CD8-positive, alpha-beta memory T cell (primary cell): ENCODE measurements at regions of chr16 and their contacts with region 1.

Region 1: GRCh38 chr16:67480833-67481560 is at the start of gene ATP6V0D1:
- DNase-seq: peak; percentile 98 to 99 (median 99)
- H3K4me3 ChIP-seq: peak within 1 kb of the TSS; percentile 96
- H3K4me3 Mint-ChIP-seq: peak within 1 kb of the TSS; percentile 96 to 100 (median 100)
- H3K27ac ChIP-seq: peak within 1 kb of the TSS; percentile 98
- H3K27ac Mint-ChIP-seq: peak within 1 kb of the TSS; percentile 96 to 100 (median 99)
- H3K4me1 ChIP-seq: peaks cover 28% of the 10 kb centered on the region
- H3K4me1 Mint-ChIP-seq: peaks cover 45 to 72% (median 47%) of the 10 kb centered on the region in 3 donors
- H3K27me3 ChIP-seq: no peaks in the 10 kb centered on the region
- H3K27me3 Mint-ChIP-seq: peaks cover 0 to 2% of the 10 kb centered on the region in 2 donors
- total RNA-seq, gene ATP6V0D1: 49.3 to 57.6 TPM

Region 2: DNA sequence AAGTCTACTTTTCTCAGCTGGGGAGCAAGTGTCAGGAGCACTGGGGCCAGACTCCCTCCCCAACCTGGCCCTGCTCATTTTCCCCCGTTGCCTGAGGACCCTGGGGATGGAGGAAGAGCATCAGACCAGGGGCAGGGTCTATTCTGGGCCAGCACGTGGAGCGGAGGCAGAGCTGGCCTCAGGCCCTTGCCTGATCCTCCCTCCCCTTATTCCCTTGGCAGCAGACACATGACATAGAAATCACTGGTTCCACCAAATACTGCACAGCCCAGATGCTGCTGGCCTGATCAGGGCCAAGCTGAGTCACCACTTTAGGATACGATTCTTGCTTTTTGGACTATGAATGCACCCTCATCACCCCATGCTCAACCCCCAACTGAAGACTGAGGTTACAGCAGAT is 18.1 kb after region 1 on chr16:
- CTCF ChIA-PET with region 1: interaction called, 30 read pairs
- POLR2A ChIA-PET with region 1: no interaction called
- DNase-seq: no peak
- H3K4me3 ChIP-seq: no peak overlapping the region
- H3K4me3 Mint-ChIP-seq: no peak overlapping the region
- H3K27ac ChIP-seq: no peak overlapping the region
- H3K27ac Mint-ChIP-seq: peak overlapping the region in 6 of 8 donors; percentile 50 to 92 (median 72)
- H3K4me1 ChIP-seq: peaks cover 18% of the 10 kb centered on the region
- H3K4me1 Mint-ChIP-seq: peaks cover 12 to 17% (median 15%) of the 10 kb centered on the region in 3 donors
- H3K27me3 ChIP-seq: no peaks in the 10 kb centered on the region
- H3K27me3 Mint-ChIP-seq: no peaks in the 10 kb centered on the region

Region 3: DNA sequence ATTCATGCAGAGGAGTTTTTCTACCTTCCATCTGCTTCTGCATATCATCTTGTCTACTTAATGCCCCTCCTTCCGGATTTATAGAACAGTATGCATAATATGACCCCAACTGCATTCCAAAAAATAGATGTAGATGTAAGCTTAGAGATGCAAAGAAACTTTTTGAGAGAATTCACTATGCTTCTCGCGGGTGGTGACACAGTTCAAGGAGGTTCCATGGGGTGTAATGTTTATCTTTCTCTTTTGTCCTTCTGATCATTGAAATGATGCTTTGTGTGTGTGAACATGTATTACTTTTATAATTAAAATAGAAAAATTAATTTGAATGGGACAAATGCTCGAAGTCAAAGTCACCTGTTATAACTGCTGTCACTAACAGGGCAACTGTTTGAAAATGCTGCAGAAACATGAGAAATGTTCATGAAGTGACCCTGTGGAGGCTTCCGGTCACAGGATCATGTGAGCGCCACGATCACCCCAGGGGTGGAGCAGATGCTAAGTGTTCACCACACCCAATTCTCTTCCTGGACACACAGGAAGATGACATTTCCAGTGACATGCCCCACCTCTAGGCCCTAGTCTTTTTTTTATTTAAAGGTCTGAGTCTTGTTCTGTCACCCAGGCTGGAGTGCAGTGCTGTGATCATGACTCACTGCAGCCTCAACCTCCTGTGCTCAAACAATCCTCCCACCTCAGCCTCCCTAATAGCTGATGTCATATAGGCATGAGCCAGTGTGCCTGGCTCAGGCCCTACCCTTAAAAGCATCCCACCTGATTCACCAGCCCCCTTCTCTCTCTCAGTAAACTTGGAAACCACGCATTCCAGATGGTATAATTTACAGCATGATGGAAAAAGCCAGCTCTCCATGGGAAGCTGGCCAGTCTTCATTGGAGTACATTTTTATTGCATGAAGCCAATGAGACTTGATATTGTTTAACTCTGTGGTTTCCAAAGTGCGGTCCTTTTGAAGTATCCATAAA is 23.3 kb after region 1 on chr16:
- CTCF ChIA-PET with region 1: interaction called, 11 read pairs
- POLR2A ChIA-PET with region 1: no interaction called
- DNase-seq: peak in 4 of 5 donors; percentile 29 to 56 (median 44)
- H3K4me3 ChIP-seq: peak overlapping the region; percentile 28
- H3K4me3 Mint-ChIP-seq: peak overlapping the region in 6 of 7 donors; percentile 56 to 77 (median 68)
- H3K27ac ChIP-seq: peak overlapping the region; percentile 21
- H3K27ac Mint-ChIP-seq: peak overlapping the region; percentile 83 to 98 (median 94)
- H3K4me1 ChIP-seq: peaks cover 59% of the 10 kb centered on the region
- H3K4me1 Mint-ChIP-seq: peaks cover 47 to 53% (median 49%) of the 10 kb centered on the region in 3 donors
- H3K27me3 ChIP-seq: no peaks in the 10 kb centered on the region
- H3K27me3 Mint-ChIP-seq: no peaks in the 10 kb centered on the region